Endothelial cell of umbilical vein (primary cell): ENCODE measurements at regions of chr16 and their contacts with region 1.

Region 1: DNA sequence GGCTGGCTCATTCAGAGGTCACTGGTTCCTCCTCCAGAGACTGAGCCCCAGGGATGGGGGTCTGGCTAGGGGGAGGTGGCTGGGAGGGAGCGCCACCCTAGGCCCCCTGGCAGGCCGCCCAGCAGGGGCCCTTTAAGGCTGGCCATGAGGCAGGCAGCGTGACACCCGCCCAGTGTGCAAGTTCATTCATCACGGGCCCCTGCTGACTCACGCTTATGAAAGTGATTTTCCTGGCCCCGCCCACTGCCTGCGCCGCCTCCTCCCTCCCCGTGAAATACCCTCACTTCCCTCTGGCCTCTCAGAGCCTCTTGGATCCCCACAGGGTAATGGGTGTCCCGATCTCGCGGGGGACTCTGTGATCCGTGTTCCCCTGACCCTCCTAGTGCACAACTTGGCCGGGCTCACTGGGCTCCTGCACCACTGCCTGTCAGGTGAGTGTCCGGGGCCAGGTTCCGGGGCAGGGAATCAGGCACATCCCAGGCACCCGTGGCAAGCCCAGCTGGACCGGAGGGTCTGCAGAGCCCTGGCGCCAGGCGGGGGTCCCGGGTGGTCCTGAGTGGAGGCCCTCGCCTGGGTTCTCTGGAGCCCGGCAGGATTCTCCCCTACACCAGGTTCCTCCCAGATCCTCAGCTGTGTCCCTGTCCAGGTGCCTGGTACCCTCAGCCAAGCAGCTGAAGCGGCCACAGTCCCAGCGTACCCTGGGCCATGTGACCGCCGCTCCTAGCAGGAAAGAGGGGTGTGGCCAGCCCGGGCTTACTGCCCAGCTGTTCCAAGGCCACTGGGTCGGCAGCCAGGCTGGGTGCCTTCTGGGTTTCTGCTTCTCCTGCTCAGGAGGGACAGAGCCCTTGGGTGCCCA is at the start of gene OSGIN1:
- DNase-seq: peak; percentile 90
- H3K4me3 ChIP-seq: peak within 1 kb of the TSS; percentile 54 to 78 (median 55)
- H3K27ac ChIP-seq: peak within 1 kb of the TSS; percentile 91
- H3K4me1 ChIP-seq: peaks cover 22% of the 10 kb centered on the region
- H3K27me3 ChIP-seq: no peaks in the 10 kb centered on the region
- CTCF ChIP-seq: no peak
- POLR2A ChIP-seq: peak; percentile 77
- total RNA-seq, gene OSGIN1: 8.6 and 11.0 TPM in 2 replicates

Region 2: DNA sequence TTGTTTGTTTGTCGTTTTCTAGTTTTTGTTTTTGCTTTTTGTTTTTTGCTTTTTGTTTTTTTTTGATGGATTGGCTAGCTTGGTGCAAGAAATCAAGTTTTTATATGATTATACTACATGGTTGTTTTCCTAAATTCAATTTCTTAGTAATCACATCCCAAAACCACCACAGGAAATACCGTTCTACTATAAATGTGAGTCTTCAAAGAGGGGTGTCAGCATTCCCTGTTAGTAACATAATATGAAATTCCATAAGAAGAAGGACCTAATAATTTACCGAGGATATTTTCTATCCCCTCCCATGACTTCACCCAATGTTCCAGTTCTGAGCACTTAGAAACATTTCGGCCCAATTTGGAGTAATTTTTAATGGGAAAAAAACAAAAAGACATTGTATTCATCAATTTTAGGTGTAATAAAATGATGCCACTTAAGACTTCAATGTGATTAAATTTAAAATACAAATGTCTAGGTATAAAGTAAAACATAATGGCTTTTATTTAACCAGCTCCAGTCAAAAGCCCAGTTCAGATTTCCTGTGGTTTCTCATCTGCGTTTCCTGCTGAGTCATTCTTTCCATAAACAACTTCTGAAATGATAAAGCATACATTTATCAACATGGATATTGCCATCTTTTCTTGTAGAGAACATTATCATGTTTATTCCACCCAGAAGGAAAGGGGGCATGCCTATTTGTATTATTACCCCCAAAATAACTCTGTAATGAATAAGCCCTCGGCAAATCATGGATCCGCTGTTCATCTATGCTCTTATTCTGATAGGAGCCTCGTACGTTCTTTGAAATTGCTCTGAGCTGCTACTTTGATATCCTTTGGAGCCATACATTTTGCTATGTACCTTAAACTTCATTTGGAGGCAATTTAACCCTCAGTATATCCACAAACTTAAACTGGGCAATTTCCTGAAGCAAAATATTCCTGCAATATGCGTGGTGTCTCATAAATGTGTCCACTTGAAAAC is 117.3 kb before region 1 on chr16:
- CTCF ChIA-PET with region 1: no interaction called
- POLR2A ChIA-PET with region 1: no interaction called
- dilution Hi-C with region 1: no loop called
- intact Hi-C with region 1: loop called (anchors 2 kb)
- DNase-seq: peak; percentile 91
- H3K4me3 ChIP-seq: peak overlapping the region in 1 of 3 experiments; percentile 29
- H3K27ac ChIP-seq: peak overlapping the region; percentile 75
- H3K4me1 ChIP-seq: peaks cover 17% of the 10 kb centered on the region
- H3K27me3 ChIP-seq: peaks cover 0 to 4% of the 10 kb centered on the region in 2 experiments
- CTCF ChIP-seq: no peak
- POLR2A ChIP-seq: no peak

Region 3: GRCh38 chr16:83926726-83927397 is 26.3 kb before region 1 on chr16:
- CTCF ChIA-PET with region 1: interaction called, 14 read pairs
- POLR2A ChIA-PET with region 1: no interaction called
- dilution Hi-C with region 1: no loop called
- intact Hi-C with region 1: loop called (anchors 2 kb)
- DNase-seq: peak; percentile 54
- H3K4me3 ChIP-seq: no peak overlapping the region
- H3K27ac ChIP-seq: no peak overlapping the region
- H3K4me1 ChIP-seq: peaks cover 3% of the 10 kb centered on the region
- H3K27me3 ChIP-seq: no peaks in the 10 kb centered on the region
- CTCF ChIP-seq: peak; percentile 98
- POLR2A ChIP-seq: no peak

Region 4: GRCh38 chr16:84062734-84063640 is 109.8 kb after region 1 on chr16:
- CTCF ChIA-PET with region 1: interaction called, 38 read pairs
- POLR2A ChIA-PET with region 1: no interaction called
- dilution Hi-C with region 1: no loop called
- intact Hi-C with region 1: loop called (anchors 1 kb)
- DNase-seq: peak; percentile 73
- H3K4me3 ChIP-seq: no peak overlapping the region
- H3K27ac ChIP-seq: peak overlapping the region; percentile 1
- H3K4me1 ChIP-seq: peaks cover 7% of the 10 kb centered on the region
- H3K27me3 ChIP-seq: no peaks in the 10 kb centered on the region
- CTCF ChIP-seq: peak; percentile 93
- POLR2A ChIP-seq: no peak

Region 5: DNA sequence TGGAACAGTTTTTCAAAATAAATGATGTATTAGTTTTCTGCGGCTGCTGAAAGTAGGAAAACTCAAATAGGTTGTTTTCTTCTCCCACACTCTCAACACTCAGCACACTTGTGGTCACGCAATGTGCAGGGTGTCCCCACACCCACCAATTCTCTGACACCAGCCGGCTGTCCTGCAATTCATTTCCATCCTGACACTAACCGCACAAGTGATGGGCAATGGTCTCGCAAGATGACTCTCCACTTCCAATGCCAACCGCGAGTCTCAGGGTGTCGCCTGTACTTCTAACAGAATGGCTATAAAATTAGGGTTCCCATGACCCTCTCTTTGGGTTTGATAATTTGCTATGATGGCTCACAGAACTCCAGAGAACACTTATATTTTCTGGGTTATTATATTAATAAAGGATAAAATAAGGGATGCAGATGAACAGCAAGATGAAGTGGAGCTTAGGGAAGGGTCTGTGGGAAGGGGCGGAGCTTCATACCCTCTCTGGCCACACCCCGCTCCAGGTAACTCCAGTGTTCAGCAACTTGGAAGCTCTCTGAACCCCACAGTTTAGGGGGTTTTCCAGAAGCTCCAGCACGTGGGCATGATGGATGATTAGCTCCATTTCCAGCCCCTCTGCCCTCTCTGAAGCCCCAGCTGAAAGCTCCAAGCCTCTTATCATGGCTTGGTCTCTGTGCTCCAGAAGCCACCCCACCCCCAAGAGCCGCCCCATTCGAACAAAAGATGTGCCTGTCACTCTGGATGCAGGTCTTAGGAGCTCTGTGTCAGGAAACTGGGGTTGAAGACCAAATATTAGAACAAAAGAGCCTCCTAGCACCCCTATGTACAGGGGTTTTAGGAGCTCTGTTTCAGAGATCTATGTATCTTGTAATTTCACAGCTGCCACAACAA is 213.9 kb after region 1 on chr16:
- CTCF ChIA-PET with region 1: no interaction called
- POLR2A ChIA-PET with region 1: no interaction called
- dilution Hi-C with region 1: no loop called
- intact Hi-C with region 1: no loop called
- DNase-seq: no peak
- H3K4me3 ChIP-seq: no peak overlapping the region
- H3K27ac ChIP-seq: no peak overlapping the region
- H3K4me1 ChIP-seq: no peaks in the 10 kb centered on the region
- H3K27me3 ChIP-seq: peaks cover 12 to 15% of the 10 kb centered on the region in 2 experiments
- CTCF ChIP-seq: no peak
- POLR2A ChIP-seq: no peak

Region 6: DNA sequence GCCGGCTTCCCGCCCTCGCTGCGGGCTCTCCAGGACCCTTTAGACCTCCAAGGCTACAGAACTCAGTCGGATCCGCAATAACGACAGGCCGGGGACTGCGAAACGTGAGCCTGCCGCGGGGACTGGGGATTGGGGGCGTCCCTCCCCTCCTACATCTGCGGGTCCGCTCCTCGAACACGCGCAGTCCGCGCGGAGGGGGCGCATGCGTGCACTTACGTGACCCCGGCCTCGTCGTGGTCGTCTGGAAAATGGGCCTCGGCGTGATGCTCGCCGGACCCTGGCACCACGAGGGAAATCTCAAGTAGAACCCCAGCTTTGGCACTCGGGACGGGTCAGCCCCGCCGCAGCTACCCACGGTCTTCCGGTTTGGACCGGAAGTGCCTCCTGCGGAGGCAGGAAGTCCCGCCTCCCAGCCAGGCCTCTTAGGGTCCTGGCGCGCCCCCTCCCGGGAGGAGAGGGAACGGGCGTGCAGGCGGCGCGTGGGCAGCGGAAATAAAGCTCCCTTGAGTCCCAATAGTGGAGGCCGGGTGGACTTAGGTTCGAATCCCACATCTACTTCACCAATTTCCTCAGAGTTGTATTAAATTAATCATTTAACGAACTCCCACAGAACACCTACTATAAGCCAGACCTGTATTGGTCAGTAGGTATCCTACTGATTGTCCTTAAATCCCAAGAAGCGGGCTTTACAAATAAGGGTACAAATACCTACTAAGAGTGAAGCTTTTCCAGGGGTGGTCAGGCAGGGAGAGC is 233.7 kb after region 1 on chr16 and contains the start of gene TAF1C:
- CTCF ChIA-PET with region 1: interaction called, 15 read pairs
- POLR2A ChIA-PET with region 1: no interaction called
- dilution Hi-C with region 1: no loop called
- intact Hi-C with region 1: loop called (anchors 2 kb)
- DNase-seq: peak; percentile 94
- H3K4me3 ChIP-seq: peak within 1 kb of the TSS; percentile 76 to 95 (median 86)
- H3K27ac ChIP-seq: peak within 1 kb of the TSS; percentile 35
- H3K4me1 ChIP-seq: peaks cover 17% of the 10 kb centered on the region
- H3K27me3 ChIP-seq: no peaks in the 10 kb centered on the region
- CTCF ChIP-seq: peak; percentile 98 to 99
- POLR2A ChIP-seq: peak; percentile 61
- total RNA-seq, gene TAF1C: 57.2 and 62.3 TPM in 2 replicates

Region 7: DNA sequence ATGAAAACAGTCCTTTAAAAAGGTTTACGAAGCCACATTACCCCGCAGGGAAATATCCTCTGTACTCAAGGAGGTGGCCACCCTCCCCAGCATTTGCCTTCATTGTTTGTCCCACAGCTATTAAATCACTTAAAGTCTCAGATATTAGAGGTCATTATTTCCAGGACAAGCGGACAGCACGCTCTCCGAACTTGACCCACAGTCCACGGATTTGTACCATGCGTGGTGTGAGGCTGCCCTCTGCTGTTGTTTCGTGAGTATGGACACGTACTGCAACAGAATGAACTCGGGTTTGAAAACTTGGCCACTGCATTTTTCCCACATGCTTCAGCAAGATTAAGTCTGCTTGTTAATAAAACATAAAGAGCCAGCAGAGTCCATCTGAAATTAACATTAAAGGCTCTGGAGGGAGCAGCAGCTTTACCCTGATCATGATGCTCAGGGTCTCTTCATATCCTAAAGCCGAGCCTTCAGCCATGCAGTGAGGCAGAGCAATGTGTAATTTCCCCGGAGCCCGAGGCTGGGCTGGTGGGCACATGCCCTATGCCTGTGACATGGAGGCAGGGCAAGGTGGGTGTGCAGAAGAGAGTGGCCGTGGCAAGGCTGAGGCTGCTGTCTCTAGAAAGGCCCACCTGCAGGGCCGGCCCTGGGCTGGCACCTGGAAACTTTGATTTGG is 531.5 kb after region 1 on chr16:
- CTCF ChIA-PET with region 1: interaction called, 3 read pairs
- POLR2A ChIA-PET with region 1: no interaction called
- dilution Hi-C with region 1: no loop called
- intact Hi-C with region 1: loop called (anchors 2 kb)
- DNase-seq: peak; percentile 61
- H3K4me3 ChIP-seq: no peak overlapping the region
- H3K27ac ChIP-seq: no peak overlapping the region
- H3K4me1 ChIP-seq: no peaks in the 10 kb centered on the region
- H3K27me3 ChIP-seq: no peaks in the 10 kb centered on the region
- CTCF ChIP-seq: peak; percentile 58 to 69
- POLR2A ChIP-seq: no peak